Psoas muscle (tissue), 8 donors: ENCODE measurements at regions of chr6 and their contacts with region 1.

Region 1: GRCh38 chr6:87472525-87473418 is at the start of gene SLC35A1:
- DNase-seq: peak; percentile 87 to 93
- ATAC-seq: peak; percentile 97 to 99 (median 98)
- H3K4me3 ChIP-seq: peak within 1 kb of the TSS; percentile 97
- H3K27ac ChIP-seq: peak within 1 kb of the TSS; percentile 97
- H3K4me1 ChIP-seq: peaks cover 5% of the 10 kb centered on the region
- H3K27me3 ChIP-seq: peaks cover 0 to 4% (median 0%) of the 10 kb centered on the region in 3 donors
- CTCF ChIP-seq: peak; percentile 24
- total RNA-seq, gene SLC35A1: 5.7 to 8.7 (median 8.0) TPM

Region 2: DNA sequence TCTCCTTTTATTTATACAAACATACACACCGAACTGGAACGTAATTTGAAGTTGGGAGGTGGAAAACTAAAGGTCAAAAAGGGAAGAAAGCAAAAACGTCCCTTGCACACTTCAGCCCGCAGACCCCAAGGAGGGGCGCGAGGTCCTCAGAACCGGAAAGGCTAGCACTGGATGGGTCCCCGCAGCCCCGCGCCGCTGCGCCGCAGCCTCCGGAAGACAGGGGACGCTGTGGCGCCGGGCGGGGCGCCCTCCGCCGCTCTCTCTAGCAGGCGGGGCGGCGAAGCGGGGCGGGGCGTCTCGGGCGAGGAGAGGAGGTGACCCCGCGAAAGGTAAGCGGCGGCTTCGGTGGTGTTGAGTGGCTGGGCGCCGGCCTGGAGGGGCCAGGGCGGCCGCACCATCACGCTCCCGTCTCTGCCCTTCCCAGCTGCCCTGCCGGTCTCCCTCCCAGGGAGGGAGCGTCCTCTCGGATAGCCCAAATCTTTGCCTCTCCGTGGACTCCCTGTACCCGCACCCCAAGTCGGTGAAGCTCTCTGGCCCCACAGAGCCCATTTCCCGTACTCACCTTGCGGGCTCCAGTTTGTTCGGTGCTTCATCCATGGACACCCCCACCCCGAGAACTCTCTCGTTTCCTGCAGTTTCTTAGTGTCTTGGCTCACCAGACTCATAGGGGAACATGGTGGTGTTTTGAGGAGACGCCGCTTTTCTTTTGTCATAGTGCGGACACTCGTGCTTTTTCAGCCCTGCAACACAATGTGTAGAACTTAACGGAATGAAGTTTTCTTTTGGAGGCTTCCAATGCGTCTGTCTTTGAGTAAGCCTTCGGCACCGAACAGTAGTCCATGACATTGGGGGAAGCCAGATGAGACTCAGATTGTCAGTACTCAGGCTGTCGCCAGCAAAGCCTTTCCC is 150.2 kb before region 1 on chr6 and contains the start of gene SMIM8:
- intact Hi-C with region 1: loop called (anchors 5 kb)
- DNase-seq: peak; percentile 86 to 92
- ATAC-seq: peak; percentile 100
- H3K4me3 ChIP-seq: peak within 1 kb of the TSS; percentile 97
- H3K27ac ChIP-seq: peak within 1 kb of the TSS; percentile 78
- H3K4me1 ChIP-seq: no peaks in the 10 kb centered on the region
- H3K27me3 ChIP-seq: no peaks in the 10 kb centered on the region
- CTCF ChIP-seq: peak; percentile 99
- total RNA-seq, gene SMIM8: 5.2 to 8.6 (median 6.4) TPM

Region 3: GRCh38 chr6:87393022-87393622 is 79.7 kb before region 1 on chr6:
- intact Hi-C with region 1: loop called in 1 of 2 experiments (anchors 5 kb)
- DNase-seq: no peak
- ATAC-seq: peak; percentile 66 to 88 (median 85)
- H3K4me3 ChIP-seq: no peak overlapping the region
- H3K27ac ChIP-seq: no peak overlapping the region
- H3K4me1 ChIP-seq: no peaks in the 10 kb centered on the region
- H3K27me3 ChIP-seq: no peaks in the 10 kb centered on the region
- CTCF ChIP-seq: peak; percentile 79

Region 4: GRCh38 chr6:87407901-87408720 is 64.7 kb before region 1 on chr6 and contains the start of gene CFAP206:
- intact Hi-C with region 1: loop called (anchors 5 kb)
- DNase-seq: peak; percentile 84 to 91
- ATAC-seq: peak; percentile 92 to 96 (median 96)
- H3K4me3 ChIP-seq: peak within 1 kb of the TSS; percentile 80
- H3K27ac ChIP-seq: peak within 1 kb of the TSS; percentile 62
- H3K4me1 ChIP-seq: peaks cover 3% of the 10 kb centered on the region
- H3K27me3 ChIP-seq: no peaks in the 10 kb centered on the region
- CTCF ChIP-seq: peak; percentile 20
- total RNA-seq, gene CFAP206: not detected

Region 5: GRCh38 chr6:87414329-87414728 is 58.4 kb before region 1 on chr6:
- intact Hi-C with region 1: loop called (anchors 5 kb)
- DNase-seq: no peak
- ATAC-seq: no peak
- H3K4me3 ChIP-seq: no peak overlapping the region
- H3K27ac ChIP-seq: no peak overlapping the region
- H3K4me1 ChIP-seq: no peaks in the 10 kb centered on the region
- H3K27me3 ChIP-seq: no peaks in the 10 kb centered on the region
- CTCF ChIP-seq: no peak